Posterior cingulate gyrus (tissue), 11 donors: ENCODE measurements at regions of chr17 and their contacts with region 1.

Region 1: GRCh38 chr17:74987418-74987908 is at the start of gene CDR2L:
- DNase-seq: peak; percentile 95 to 100 (median 98)

Region 2: GRCh38 chr17:74961657-74962490 is 25.6 kb before region 1 on chr17:
- intact Hi-C with region 1: loop called (anchors 1 kb)
- DNase-seq: peak; percentile 78 to 98 (median 90)

Region 3: DNA sequence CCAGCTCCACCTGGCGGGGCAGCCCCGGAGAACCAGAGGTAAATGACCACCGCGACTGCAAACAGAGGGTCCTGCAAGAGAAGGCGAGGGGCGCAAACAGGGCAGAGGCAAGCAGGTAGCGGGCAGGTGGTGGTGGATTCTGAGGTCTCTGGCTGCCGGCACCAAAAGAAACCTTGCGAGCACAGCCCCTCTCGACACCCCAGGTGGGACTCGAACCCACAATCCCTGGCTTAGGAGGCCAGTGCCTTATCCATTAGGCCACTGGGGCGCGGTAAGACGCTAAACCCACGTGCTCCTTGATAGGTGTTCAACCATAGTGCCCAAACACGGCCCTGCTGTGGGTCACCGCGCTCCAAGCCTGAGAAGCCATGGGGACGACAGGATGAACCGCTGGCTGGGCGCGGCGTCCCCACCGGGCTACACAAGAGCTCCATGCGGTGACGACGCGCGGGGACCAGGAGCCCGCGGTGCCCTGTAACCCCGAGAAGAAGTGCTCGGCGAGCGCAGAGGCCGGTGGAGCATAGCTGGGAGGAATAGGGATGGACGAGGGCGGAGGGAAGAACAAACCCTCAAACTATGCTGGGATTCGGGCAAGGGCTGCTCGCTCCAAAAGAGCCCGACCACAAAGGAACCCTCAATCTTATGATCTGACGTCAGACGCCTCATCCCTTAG is 46.9 kb after region 1 on chr17:
- intact Hi-C with region 1: loop called (anchors 10 kb)
- DNase-seq: peak; percentile 75 to 97 (median 86)

Region 4: DNA sequence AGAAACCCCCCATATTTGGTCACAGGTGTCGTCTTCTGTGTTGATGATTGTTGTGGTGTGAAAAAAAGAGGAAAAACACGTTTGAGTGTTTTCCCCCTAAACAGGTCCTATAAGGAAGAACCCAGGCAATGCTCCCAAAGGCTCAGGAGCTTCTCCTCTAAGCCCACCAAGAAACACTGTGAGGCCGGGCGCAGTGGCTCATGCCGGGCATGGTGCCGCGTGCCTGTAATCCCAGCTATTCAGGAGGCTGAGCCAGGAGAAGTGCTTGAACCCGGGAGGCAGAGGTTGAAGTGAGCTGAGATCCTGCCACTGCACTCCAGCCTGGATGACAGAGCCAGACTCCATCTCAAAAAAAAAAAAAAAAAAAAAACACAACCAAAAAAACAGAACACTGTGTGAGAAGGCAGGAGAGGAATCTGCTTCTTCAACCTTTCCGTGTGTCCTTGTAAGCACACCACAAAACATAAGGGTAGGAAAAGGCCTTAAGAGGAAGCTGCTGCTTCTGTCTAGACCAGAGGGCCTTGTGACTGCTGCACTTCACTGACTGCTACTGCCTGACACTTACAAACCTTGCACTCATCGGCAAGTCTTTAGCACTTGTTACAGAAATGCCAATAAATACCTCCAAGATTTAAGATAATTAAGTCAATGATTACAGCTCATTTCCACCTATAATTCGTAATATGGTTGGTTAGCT is 157.5 kb after region 1 on chr17:
- intact Hi-C with region 1: no loop called
- DNase-seq: peak in 2 of 10 donors; percentile 48 to 79